IMR-90 (cell line): ENCODE measurements at regions of chr6 and their contacts with region 1.

Region 1: DNA sequence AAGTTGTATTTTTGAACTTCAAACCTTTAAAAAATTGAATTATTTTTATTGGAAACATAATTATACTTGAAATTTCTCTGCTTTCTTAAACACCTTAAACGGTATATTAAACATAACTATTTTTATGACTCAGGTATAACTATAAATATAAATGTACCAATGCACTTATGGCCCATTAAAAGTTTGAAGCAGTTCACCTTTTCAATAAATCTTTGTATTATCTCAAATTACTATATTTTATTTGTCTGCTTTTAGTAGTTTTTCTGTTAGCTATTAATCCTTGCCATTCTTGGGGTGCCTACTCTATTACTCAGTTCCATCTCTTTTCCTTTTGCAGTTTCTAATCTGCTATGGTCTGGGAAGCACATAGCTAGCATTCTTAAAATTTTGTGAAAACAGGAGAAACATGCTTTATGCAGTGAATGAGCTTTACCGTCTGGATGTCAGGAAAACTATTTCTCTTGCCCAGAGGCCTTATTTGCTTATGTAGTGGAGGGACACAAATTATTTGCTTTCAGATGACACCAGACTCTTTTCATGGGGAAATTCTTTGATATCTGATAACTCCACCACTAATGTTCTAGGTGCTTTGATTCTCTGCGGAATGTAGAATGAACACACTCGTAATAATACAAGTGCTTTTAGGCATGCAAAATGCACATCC is 378.9 kb upstream of the CITED2 start:
- DNase-seq: peak; percentile 77
- ATAC-seq: peak; percentile 75
- H3K4me3 ChIP-seq: no peak overlapping the region
- H3K27ac ChIP-seq: 0 out of 2 replicates have a peak overlapping the region, but pooled peaks have one; percentile 29
- H3K4me1 ChIP-seq: peaks cover 12% of the 10 kb centered on the region
- H3K27me3 ChIP-seq: no peaks in the 10 kb centered on the region
- CTCF ChIP-seq: no peak
- POLR2A ChIP-seq: no peak
- RAD21 ChIP-seq: no peak

Region 2: DNA sequence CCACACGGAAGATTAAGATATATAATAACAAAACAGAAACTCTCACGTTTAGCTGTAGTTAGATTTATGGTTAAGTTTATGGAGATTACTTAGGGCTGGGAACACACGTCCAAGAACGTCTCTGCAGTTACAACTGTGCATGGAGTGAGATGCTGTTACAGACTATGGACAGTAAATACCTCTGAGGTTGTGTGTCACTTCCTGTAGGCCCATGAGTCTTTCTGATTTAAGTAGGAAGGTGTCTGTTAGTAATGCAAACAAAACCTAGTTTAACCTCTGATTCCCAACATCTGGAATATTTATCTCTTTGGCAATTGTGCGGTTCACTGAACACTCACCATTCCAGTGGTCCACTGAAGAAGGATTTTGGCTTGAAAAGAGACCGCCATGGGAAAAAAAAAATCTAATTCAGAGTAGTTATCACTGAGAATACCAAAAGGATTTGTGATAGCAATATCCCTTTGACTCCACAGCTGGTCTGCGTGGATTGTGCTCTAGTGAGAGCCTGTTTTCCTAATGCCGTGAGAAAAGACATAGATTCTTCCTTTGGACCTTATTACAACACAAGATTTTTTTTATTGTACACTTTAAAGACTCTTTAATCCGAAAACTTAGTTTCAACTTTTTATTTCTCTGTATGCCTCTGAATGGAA is 99.3 kb after region 1 on chr6:
- CTCF ChIA-PET with region 1: no interaction called
- POLR2A ChIA-PET with region 1: no interaction called
- dilution Hi-C with region 1: no loop called
- in situ Hi-C with region 1: no loop called
- intact Hi-C with region 1: loop called (anchors 5 kb)
- DNase-seq: peak; percentile 93
- ATAC-seq: peak; percentile 69
- H3K4me3 ChIP-seq: no peak overlapping the region
- H3K27ac ChIP-seq: peak overlapping the region; percentile 23; the same call in 1 of the 2 replicates
- H3K4me1 ChIP-seq: peaks cover 11% of the 10 kb centered on the region
- H3K27me3 ChIP-seq: no peaks in the 10 kb centered on the region
- CTCF ChIP-seq: no peak
- POLR2A ChIP-seq: peak; percentile 55; the same call in 1 of the 2 replicates
- RAD21 ChIP-seq: no peak